ENCODE measurements at regions of chr21 and their contacts with region 1.

Region 1: DNA sequence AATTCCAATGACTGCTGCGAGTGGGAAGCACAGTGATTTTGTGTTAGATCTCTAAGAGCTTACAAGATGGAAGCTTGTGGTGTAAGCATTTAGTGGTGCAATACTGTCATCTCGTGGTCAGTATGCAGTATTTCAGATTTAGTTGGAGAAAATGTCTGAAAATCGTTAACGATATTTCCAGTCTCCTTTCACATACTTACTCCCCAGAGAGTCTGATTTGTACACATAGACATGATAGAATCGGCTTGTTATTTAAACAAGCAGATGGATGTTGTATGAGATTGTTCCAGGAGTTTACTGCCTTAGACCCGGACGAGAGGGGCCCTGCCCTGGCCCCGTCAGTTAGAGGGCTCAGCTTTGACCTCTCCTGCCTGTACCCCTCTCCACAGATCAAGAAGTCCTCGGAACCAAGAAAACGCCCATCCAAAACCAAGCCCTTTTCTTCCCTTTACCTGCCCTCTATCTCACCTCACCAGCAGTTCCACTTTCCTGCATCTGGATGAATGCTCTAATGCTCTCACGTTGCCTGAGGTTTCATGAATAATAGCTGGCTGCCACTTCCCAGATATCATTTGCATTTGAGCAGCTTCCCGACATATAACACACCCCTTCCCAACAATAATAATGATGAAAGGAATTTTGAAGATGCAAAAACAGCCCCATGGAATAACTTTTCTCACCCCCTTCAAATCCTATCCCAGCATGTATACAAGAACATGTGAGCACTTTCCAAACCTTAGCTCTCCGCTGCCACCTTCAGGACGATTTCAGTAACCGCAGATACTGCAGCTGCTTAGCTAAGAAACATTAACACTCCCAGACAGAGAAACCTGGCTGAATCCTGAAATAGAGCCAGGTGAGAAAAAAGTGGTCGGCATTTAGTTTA is 247.3 kb downstream of the LTN1 start:
- DNase-seq: peak; percentile 66
- H3K4me3 ChIP-seq: peak overlapping the region; percentile 10 to 23
- H3K27ac ChIP-seq: peak overlapping the region; percentile 19 to 55
- H3K4me1 ChIP-seq: no peaks in the 10 kb centered on the region
- H3K27me3 ChIP-seq: no peaks in the 10 kb centered on the region
- CTCF ChIP-seq: peak; percentile 88 to 99 (median 94)
- POLR2A ChIP-seq: no peak

Region 2: DNA sequence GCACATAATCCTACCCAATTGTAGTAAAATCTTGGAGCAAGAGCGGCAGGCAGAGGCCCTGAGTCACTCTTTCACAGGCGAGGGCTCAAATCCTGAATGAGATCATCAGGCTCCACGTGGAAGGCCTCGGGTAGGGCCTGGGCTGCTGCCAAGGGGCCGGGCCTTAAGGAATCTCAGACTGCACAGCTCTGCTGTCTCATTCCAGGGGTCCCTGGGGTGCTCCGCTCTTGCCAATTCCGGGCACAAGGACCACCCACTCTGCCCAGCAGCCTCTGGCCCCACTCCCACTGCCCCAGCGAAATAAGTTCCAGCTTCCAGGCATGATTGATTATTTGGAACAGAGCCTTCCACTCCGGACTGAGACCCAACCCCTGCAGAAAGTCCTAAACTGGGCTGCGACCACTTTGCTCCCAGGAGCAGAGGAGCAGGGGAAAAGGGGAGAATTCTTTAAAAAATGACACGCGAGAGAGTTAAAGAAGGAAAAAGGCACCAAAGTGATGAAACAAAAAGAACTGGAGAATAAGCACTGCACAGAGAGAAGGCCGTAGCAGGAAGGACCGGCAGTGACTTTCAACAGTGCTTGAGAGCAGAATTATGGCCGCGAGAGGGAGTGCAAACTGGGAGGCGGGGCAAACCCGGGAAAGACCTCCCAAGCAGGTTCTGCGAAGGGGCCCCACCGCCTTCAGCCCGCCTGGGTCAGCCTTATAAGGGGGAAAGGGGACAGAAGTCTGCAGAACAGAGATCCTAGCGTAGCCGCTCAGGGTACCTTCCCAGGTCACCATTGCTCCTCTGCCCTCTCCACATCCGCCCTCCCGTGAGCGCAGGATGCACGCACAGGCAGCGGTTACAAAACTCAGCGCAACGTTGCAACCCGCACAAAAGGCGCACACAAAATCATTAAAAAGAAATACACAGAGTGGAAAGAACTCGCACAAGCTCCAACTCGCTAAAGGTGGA is 1902.1 kb before region 1 on chr21:
- intact Hi-C with region 1: loop called (anchors 2 kb)
- DNase-seq: peak; percentile 85
- H3K4me3 ChIP-seq: peak overlapping the region; percentile 50 to 53
- H3K27ac ChIP-seq: peak overlapping the region; percentile 83
- H3K4me1 ChIP-seq: no peaks in the 10 kb centered on the region
- H3K27me3 ChIP-seq: no peaks in the 10 kb centered on the region
- CTCF ChIP-seq: peak in 3 of 4 experiments; percentile 14 to 36 (median 31)
- POLR2A ChIP-seq: peak; percentile 18

Region 3: GRCh38 chr21:26967062-26967913 is 1778.1 kb before region 1 on chr21 and contains the start of gene ADAMTS5:
- intact Hi-C with region 1: loop called (anchors 10 kb)
- DNase-seq: peak; percentile 5
- H3K4me3 ChIP-seq: peak within 1 kb of the TSS; percentile 33 to 40
- H3K27ac ChIP-seq: peak within 1 kb of the TSS; percentile 42 to 66
- H3K4me1 ChIP-seq: no peaks in the 10 kb centered on the region
- H3K27me3 ChIP-seq: peaks cover 6% of the 10 kb centered on the region
- CTCF ChIP-seq: no peak
- POLR2A ChIP-seq: no peak
- total RNA-seq, gene ADAMTS5: 3.0 TPM

Region 4: GRCh38 chr21:28342212-28342810 is 403.1 kb before region 1 on chr21:
- intact Hi-C with region 1: loop called (anchors 10 kb)
- DNase-seq: no peak
- H3K4me3 ChIP-seq: no peak overlapping the region
- H3K27ac ChIP-seq: no peak overlapping the region
- H3K4me1 ChIP-seq: no peaks in the 10 kb centered on the region
- H3K27me3 ChIP-seq: no peaks in the 10 kb centered on the region
- CTCF ChIP-seq: no peak
- POLR2A ChIP-seq: no peak

Region 5: DNA sequence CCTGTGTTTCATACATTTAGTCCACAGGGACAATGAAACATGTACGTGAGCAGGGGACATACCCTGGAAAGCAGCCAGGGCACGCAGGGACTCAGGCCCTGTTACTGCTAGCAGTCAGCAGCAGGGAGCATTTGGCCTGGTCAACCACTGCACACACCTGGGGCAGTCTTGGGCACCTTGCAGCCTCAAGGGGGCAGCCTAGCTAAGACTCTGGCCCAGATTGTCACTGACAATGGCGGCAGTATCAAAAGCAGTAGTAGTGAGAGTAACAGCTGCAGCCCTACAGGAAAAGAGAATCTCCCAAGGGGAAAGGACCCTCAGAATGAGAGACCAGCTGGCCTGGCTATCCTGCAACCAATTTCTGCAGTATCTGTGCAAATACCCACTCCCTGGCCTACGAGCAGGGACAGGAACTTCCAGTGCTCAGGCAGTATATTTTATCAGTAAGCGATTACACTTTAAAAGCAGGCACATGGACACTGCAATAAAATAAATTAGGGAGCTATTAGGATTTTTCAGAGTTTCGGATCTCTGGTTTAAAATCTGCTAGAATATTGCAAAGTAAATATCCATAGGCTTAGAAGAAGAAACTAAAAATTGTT is 228.3 kb before region 1 on chr21:
- intact Hi-C with region 1: loop called (anchors 5 kb)
- DNase-seq: peak; percentile 44
- H3K4me3 ChIP-seq: no peak overlapping the region
- H3K27ac ChIP-seq: no peak overlapping the region
- H3K4me1 ChIP-seq: no peaks in the 10 kb centered on the region
- H3K27me3 ChIP-seq: no peaks in the 10 kb centered on the region
- CTCF ChIP-seq: peak; percentile 25 to 57 (median 53)
- POLR2A ChIP-seq: no peak

Region 6: DNA sequence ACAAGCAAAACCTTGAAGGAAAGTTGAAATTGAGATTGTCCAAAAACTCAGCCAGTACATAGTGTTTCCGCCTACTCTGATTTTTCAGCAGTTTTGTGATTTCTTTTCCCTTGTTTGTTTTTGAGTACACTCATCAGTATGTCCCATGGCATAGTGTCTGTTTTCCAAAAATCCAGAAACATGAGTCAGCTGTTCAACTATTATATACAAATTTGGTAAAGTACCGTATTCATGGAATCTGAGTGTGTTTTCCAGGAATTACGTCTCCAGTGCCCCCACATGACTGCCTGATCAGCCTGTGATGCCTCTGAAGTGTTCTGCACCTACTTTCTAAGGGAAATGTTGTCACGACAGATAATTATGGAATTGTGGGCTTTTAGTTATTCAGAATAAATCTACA is 60.5 kb after region 1 on chr21:
- intact Hi-C with region 1: no loop called
- DNase-seq: no peak
- H3K4me3 ChIP-seq: no peak overlapping the region
- H3K27ac ChIP-seq: no peak overlapping the region
- H3K4me1 ChIP-seq: no peaks in the 10 kb centered on the region
- H3K27me3 ChIP-seq: no peaks in the 10 kb centered on the region
- CTCF ChIP-seq: no peak
- POLR2A ChIP-seq: no peak

Region 7: GRCh38 chr21:28943631-28944030 is 198.3 kb after region 1 on chr21:
- intact Hi-C with region 1: loop called (anchors 5 kb)
- DNase-seq: no peak
- H3K4me3 ChIP-seq: no peak overlapping the region
- H3K27ac ChIP-seq: no peak overlapping the region
- H3K4me1 ChIP-seq: no peaks in the 10 kb centered on the region
- H3K27me3 ChIP-seq: no peaks in the 10 kb centered on the region
- CTCF ChIP-seq: no peak
- POLR2A ChIP-seq: no peak